Activated CD4-positive, alpha-beta T cell treated with anti-CD3 and anti-CD28 coated beads for 36 hours (primary cell): ENCODE measurements at regions of chr7 and their contacts with region 1.

Region 1: DNA sequence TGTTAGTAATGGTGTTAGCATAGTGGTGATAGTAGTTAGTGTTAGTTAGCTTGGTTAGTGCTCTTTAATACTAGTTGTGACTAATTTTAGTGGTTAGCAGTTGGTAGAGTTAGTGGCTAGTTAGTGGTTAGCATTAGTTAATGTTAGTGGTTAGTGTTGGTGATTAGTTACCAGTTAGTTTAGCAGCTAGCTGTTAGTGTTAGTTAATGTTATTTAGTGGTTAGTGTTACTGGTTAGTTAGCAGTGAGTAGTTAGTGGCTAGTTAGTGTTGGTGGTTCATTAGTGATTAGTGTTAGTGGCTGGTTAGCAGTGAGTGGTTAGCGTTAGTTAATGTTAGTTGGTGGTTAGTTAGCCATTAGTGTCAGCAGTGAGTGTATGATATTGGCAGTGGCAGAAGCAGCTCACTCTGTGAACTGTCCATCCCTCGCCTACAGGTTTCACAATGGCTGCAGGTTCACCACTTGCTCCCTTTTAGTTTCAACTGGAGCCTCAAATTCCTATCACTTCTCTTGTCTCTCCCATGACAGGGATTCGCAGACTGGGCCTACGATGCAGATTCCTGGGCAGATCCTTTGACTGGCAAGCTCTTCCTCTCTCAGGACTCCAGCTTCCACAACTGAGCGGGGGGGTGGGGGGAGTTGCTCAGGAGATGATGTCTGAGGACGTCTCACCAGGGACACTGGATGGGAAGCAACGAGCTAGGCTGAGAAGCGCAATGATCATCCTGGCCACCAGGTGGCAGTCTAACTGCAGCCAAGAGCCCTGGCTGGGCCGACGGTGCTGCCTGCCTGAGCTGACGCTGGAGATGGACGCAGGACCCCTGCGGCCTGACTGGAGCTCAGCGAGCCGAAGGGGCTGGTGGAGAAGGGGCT is 19.5 kb downstream of the GHRHR start:
- DNase-seq: peak; percentile 88
- ATAC-seq: peak; percentile 94
- H3K4me3 Mint-ChIP-seq: peak overlapping the region; percentile 9
- H3K27ac Mint-ChIP-seq: no peak overlapping the region
- H3K4me1 Mint-ChIP-seq: peaks cover 4% of the 10 kb centered on the region
- H3K27me3 Mint-ChIP-seq: peaks cover 33% of the 10 kb centered on the region

Region 2: GRCh38 chr7:30938435-30939316 is 44.6 kb before region 1 on chr7:
- CTCF ChIA-PET with region 1: interaction called, 11 read pairs
- POLR2A ChIA-PET with region 1: no interaction called
- intact Hi-C with region 1: no loop called
- DNase-seq: peak; percentile 83
- ATAC-seq: peak; percentile 84
- H3K4me3 Mint-ChIP-seq: no peak overlapping the region
- H3K27ac Mint-ChIP-seq: no peak overlapping the region
- H3K4me1 Mint-ChIP-seq: no peaks in the 10 kb centered on the region
- H3K27me3 Mint-ChIP-seq: peaks cover 17% of the 10 kb centered on the region

Region 3: GRCh38 chr7:31106303-31107120 is 123.2 kb after region 1 on chr7:
- CTCF ChIA-PET with region 1: interaction called, 10 read pairs
- POLR2A ChIA-PET with region 1: no interaction called
- intact Hi-C with region 1: no loop called
- DNase-seq: no peak
- ATAC-seq: no peak
- H3K4me3 Mint-ChIP-seq: no peak overlapping the region
- H3K27ac Mint-ChIP-seq: no peak overlapping the region
- H3K4me1 Mint-ChIP-seq: no peaks in the 10 kb centered on the region
- H3K27me3 Mint-ChIP-seq: no peaks in the 10 kb centered on the region

Region 4: DNA sequence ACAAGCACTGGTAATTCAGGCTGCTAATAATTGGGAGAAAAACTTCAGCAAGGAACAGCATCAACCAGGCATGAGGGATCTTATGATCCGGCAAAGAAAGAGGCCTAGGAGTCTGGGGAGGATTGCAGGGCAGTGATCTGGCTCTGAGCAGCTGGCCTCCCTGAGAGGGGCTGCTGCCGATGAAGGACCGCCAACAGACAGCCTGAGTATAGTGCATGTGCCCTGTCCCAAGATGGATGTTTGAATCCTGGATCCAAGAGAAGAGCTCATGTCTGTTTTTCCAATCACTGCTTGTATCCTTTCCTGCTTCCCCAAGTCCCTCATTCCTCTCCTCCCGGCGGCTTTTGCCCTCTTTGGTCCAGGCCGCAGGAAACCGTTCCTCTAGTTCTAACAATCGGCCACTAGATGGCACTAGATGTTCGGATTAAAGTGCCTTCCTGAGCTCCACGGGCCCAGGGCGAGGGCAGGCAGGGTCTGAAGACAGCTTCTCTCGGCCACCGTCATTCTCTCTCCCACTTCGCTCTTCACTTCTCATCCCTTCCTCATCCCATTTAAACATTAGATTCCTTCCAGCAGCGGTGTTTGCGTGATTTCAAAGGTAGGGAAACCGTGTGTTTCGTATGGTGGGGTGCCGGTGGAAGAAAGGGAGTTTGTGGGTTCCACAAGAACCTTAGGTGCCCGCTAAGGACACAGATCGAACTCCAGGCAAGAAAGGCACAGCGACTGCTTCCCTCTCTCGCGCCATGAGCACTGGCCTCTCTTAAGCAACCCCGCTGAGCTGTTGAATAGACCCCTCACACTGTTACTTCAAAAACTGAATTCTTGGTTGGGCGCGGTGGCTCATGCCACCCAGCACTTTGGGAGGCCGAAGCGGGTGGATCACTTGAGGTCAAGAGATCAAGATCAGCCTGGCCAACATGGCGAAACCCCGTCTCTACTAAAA is 151.2 kb after region 1 on chr7:
- CTCF ChIA-PET with region 1: interaction called, 41 read pairs
- POLR2A ChIA-PET with region 1: no interaction called
- intact Hi-C with region 1: no loop called
- DNase-seq: peak; percentile 73
- ATAC-seq: peak; percentile 64
- H3K4me3 Mint-ChIP-seq: no peak overlapping the region
- H3K27ac Mint-ChIP-seq: no peak overlapping the region
- H3K4me1 Mint-ChIP-seq: no peaks in the 10 kb centered on the region
- H3K27me3 Mint-ChIP-seq: peaks cover 2% of the 10 kb centered on the region

Region 5: DNA sequence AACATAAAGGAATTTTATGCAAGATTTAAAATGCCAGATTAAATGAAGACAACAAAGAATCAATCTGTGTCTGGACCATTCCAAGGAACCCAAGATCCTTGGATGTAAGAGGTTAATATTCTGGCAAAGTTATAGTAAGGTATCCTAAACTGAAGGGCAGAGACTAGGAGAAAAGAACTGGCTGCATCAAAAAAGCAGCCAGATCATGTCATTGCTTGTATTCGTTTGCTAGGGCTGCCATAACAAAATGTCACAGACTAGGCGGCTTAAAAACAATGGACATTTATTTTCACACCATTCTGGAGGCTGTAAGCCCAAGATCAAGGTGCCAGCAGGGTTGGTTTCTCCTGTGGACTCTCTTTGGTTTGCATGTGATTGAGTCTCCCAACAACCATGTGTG is 168.6 kb after region 1 on chr7:
- CTCF ChIA-PET with region 1: no interaction called
- POLR2A ChIA-PET with region 1: no interaction called
- intact Hi-C with region 1: no loop called
- DNase-seq: no peak
- ATAC-seq: no peak
- H3K4me3 Mint-ChIP-seq: no peak overlapping the region
- H3K27ac Mint-ChIP-seq: no peak overlapping the region
- H3K4me1 Mint-ChIP-seq: no peaks in the 10 kb centered on the region
- H3K27me3 Mint-ChIP-seq: no peaks in the 10 kb centered on the region

Region 6: GRCh38 chr7:31735991-31736982 is 753.0 kb after region 1 on chr7:
- CTCF ChIA-PET with region 1: no interaction called
- POLR2A ChIA-PET with region 1: no interaction called
- intact Hi-C with region 1: loop called in 1 of 2 experiments (anchors 10 kb)
- DNase-seq: peak; percentile 27
- ATAC-seq: no peak
- H3K4me3 Mint-ChIP-seq: no peak overlapping the region
- H3K27ac Mint-ChIP-seq: no peak overlapping the region
- H3K4me1 Mint-ChIP-seq: no peaks in the 10 kb centered on the region
- H3K27me3 Mint-ChIP-seq: peaks cover 3% of the 10 kb centered on the region